ENCODE measurements at regions of chr7 and their contacts with region 1.

Region 1: DNA sequence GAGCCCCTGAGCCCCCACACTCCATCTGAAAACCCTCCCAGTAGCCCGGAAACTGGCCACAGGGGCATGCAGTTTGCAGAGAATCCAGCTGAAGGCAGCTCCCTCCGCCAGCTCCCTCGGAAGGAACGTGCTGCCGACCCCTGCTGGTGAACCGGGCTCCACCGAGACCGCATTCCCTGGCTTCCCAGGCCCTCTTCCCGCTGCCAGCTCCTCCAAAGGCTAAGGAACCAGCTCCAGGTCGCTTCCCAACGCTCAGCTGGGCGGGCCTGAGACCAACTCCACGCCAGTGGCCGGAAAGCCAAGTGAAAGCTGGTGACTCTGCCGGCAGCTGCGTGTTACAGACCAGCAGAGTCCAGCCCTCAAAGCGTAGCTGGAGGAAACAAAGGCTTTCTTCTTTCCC is 35.8 kb downstream of the GPER1 start:
- DNase-seq: peak; percentile 94
- H3K4me3 ChIP-seq: no peak overlapping the region
- H3K27ac ChIP-seq: peak overlapping the region; percentile 75
- H3K4me1 ChIP-seq: peaks cover 12% of the 10 kb centered on the region
- H3K27me3 ChIP-seq: no peaks in the 10 kb centered on the region
- CTCF ChIP-seq: peak; percentile 78 to 93
- POLR2A ChIP-seq: peak; percentile 38

Region 2: DNA sequence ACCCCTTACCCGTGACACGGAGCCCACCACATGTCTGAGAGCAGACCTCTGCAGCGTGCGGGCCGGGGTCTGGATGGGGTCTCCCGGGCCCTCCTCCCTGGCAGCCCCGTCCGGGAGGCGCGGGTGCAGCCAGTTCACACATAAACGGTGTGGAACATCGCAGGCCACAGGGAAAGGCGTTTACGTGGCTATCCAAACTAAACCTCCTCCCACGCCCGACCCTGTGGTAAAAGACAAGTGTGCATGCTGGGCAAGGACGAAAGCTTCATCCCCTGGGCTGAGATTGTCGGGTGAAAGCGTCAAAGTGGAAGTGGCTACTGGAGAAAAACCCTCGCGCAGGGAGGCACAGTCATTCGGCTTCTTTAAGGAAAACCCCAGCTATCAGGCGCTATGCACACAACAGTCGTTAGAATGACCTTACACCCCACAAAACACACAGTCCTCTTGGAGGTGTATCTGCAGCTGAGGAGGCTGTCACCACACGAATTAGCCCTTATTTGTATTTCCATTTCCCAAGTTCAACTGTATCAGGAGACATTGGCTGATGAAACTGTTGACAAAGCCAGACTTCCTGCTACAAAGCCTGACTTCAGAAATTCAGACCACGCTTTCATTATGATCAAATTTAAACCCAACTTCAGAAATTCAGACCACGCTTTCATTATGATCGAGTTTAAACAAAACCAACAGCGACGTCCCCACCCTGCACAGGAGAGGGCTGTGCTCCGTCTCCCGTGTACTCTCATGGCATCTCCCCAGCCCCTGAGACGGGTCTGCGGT is 20.5 kb before region 1 on chr7:
- CTCF ChIA-PET with region 1: interaction called, 24 read pairs
- POLR2A ChIA-PET with region 1: no interaction called
- dilution Hi-C with region 1: no loop called
- intact Hi-C with region 1: no loop called
- DNase-seq: no peak
- H3K4me3 ChIP-seq: no peak overlapping the region
- H3K27ac ChIP-seq: no peak overlapping the region
- H3K4me1 ChIP-seq: peaks cover 19% of the 10 kb centered on the region
- H3K27me3 ChIP-seq: no peaks in the 10 kb centered on the region
- CTCF ChIP-seq: no peak
- POLR2A ChIP-seq: no peak

Region 3: GRCh38 chr7:1112109-1112508 is 11.6 kb before region 1 on chr7:
- CTCF ChIA-PET with region 1: interaction called, 20 read pairs
- POLR2A ChIA-PET with region 1: interaction called, 4 read pairs
- dilution Hi-C with region 1: no loop called
- intact Hi-C with region 1: no loop called
- DNase-seq: peak; percentile 74
- H3K4me3 ChIP-seq: no peak overlapping the region
- H3K27ac ChIP-seq: no peak overlapping the region
- H3K4me1 ChIP-seq: peaks cover 7% of the 10 kb centered on the region
- H3K27me3 ChIP-seq: no peaks in the 10 kb centered on the region
- CTCF ChIP-seq: no peak
- POLR2A ChIP-seq: no peak

Region 4: GRCh38 chr7:1137510-1138167 is 13.9 kb after region 1 on chr7:
- CTCF ChIA-PET with region 1: interaction called, 34 read pairs
- POLR2A ChIA-PET with region 1: no interaction called
- dilution Hi-C with region 1: no loop called
- intact Hi-C with region 1: no loop called
- DNase-seq: no peak
- H3K4me3 ChIP-seq: peak overlapping the region; percentile 72 to 97 (median 80)
- H3K27ac ChIP-seq: peak overlapping the region; percentile 33
- H3K4me1 ChIP-seq: peaks cover 10% of the 10 kb centered on the region
- H3K27me3 ChIP-seq: no peaks in the 10 kb centered on the region
- CTCF ChIP-seq: no peak
- POLR2A ChIP-seq: peak; percentile 64

Measured in endothelial cell of umbilical vein (primary cell).